Gastrocnemius medialis (tissue), 4 donors: ENCODE measurements at regions of chr9 and their contacts with region 1.

Region 1: GRCh38 chr9:20356403-20357035 is 265.8 kb downstream of the MLLT3 start:
- DNase-seq: peak; percentile 30 to 50
- ATAC-seq: peak; percentile 78 to 81
- H3K4me3 ChIP-seq: peak overlapping the region; percentile 1 to 52 (median 27)
- H3K27ac ChIP-seq: peak overlapping the region; percentile 32 to 60 (median 38)
- H3K4me1 ChIP-seq: peaks cover 27 to 49% of the 10 kb centered on the region in 2 donors
- H3K27me3 ChIP-seq: no peaks in the 10 kb centered on the region
- CTCF ChIP-seq: peak; percentile 17 to 72 (median 40)
- POLR2A ChIP-seq: no peak

Region 2: DNA sequence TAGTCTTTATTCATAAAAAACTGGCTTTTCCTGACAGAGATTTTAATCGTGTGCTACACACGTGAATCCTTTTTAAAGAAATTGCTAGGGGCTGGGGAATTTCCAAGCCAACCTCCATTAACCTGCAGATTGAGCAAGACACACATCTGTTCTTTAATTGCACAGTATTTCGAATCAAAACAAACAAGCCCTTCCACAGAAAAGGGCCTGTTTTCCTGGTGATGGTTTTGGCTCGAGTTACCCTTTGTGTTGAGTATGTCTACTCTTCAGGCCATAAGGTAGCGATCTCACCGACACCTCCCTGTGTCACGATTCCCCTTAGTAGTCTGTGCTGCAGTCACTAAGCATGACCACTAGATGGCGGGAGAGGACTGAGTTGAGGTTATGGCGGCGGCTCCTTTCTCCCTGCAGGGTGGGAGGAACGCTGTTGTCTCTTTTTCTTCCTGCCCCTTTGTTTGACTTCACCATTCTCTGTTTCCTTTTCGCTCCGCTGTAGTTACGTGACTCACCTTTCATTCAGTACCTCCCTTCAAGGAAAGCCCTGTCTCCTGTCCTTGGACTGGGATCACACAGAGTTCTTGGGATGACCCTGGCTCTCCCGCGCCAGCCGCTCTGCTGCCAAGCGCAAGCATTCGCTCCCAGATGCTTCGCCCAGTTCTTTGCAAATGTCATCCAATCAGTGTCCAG is 430.6 kb before region 1 on chr9:
- in situ Hi-C with region 1: loop called in 1 of 4 experiments (anchors 10 kb)
- intact Hi-C with region 1: loop called (anchors 2 kb)
- DNase-seq: peak; percentile 37 to 43
- ATAC-seq: peak; percentile 88 to 96
- H3K4me3 ChIP-seq: peak overlapping the region; percentile 37 to 62 (median 52)
- H3K27ac ChIP-seq: no peak overlapping the region
- H3K4me1 ChIP-seq: peaks cover 0 to 3% of the 10 kb centered on the region in 2 donors
- H3K27me3 ChIP-seq: no peaks in the 10 kb centered on the region
- CTCF ChIP-seq: peak; percentile 86 to 95 (median 90)
- POLR2A ChIP-seq: no peak

Region 3: DNA sequence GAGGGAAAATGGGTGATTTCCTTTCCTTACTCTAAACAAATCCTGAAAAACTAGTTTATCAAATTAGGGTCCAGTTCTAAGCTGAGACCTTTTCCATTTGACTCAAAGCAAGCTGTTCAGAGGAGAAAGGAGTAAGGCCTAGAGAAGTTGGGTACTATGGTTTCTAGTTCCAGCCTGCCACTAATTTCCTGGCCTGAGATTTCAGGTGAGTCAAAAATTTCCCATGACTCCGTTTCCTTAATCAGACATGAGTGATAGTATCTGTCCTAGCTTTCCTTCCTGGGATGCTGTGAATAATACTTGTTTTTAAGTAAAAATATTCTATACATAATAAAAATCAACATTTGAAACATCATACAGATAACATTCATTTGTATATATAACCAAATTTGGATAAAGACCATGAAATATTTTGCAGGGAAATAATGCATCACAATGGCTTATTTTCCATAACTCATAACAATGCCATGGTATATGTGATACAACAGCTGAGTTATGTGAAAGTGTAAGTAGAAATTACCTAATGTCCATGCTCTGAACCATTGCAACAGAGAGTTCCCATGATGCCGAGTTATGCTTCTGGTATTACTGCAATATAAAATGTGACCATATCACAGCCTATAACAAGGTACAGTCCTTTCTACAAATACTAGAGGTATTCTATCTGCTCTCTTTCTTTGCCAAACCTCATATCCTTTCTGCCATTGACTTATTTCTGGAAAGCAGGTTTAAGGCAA is 123.1 kb after region 1 on chr9:
- in situ Hi-C with region 1: no loop called
- intact Hi-C with region 1: loop called (anchors 5 kb)
- DNase-seq: no peak
- ATAC-seq: peak in 1 of 2 donors; percentile 33
- H3K4me3 ChIP-seq: no peak overlapping the region
- H3K27ac ChIP-seq: no peak overlapping the region
- H3K4me1 ChIP-seq: peaks cover 25 to 31% of the 10 kb centered on the region in 2 donors
- H3K27me3 ChIP-seq: no peaks in the 10 kb centered on the region
- CTCF ChIP-seq: no peak
- POLR2A ChIP-seq: no peak

Region 4: GRCh38 chr9:20684035-20684872 is 327.7 kb after region 1 on chr9 and contains the start of gene FOCAD:
- in situ Hi-C with region 1: loop called in 1 of 4 experiments (anchors 25 kb)
- intact Hi-C with region 1: loop called (anchors 2 kb)
- DNase-seq: peak; percentile 92 to 96
- ATAC-seq: peak; percentile 90 to 94
- H3K4me3 ChIP-seq: peak within 1 kb of the TSS; percentile 71 to 82 (median 77)
- H3K27ac ChIP-seq: peak within 1 kb of the TSS; percentile 89 to 98 (median 96)
- H3K4me1 ChIP-seq: peaks cover 16 to 31% of the 10 kb centered on the region in 2 donors
- H3K27me3 ChIP-seq: no peaks in the 10 kb centered on the region
- CTCF ChIP-seq: peak in 1 of 5 experiments; percentile 14
- POLR2A ChIP-seq: peak; percentile 95 to 99
- total RNA-seq, gene FOCAD: 19.5 to 36.0 (median 28.6) TPM

Region 5: GRCh38 chr9:20941174-20941690 is 584.7 kb after region 1 on chr9:
- in situ Hi-C with region 1: loop called (anchors 5 to 25 kb)
- intact Hi-C with region 1: loop called (anchors 1 kb)
- DNase-seq: peak; percentile 14 to 18
- ATAC-seq: peak; percentile 87 to 93
- H3K4me3 ChIP-seq: no peak overlapping the region
- H3K27ac ChIP-seq: no peak overlapping the region
- H3K4me1 ChIP-seq: no peaks in the 10 kb centered on the region
- H3K27me3 ChIP-seq: no peaks in the 10 kb centered on the region
- CTCF ChIP-seq: peak; percentile 62 to 87 (median 72)
- POLR2A ChIP-seq: no peak

Region 6: GRCh38 chr9:21096172-21096900 is 739.8 kb after region 1 on chr9:
- in situ Hi-C with region 1: loop called in 1 of 4 experiments (anchors 25 kb)
- intact Hi-C with region 1: loop called (anchors 10 kb)
- DNase-seq: no peak
- ATAC-seq: peak; percentile 69 to 90
- H3K4me3 ChIP-seq: peak overlapping the region; percentile 30 to 40 (median 36)
- H3K27ac ChIP-seq: peak overlapping the region; percentile 46 to 64 (median 57)
- H3K4me1 ChIP-seq: peaks cover 0 to 15% of the 10 kb centered on the region in 2 donors
- H3K27me3 ChIP-seq: no peaks in the 10 kb centered on the region
- CTCF ChIP-seq: no peak
- POLR2A ChIP-seq: no peak

Region 7: DNA sequence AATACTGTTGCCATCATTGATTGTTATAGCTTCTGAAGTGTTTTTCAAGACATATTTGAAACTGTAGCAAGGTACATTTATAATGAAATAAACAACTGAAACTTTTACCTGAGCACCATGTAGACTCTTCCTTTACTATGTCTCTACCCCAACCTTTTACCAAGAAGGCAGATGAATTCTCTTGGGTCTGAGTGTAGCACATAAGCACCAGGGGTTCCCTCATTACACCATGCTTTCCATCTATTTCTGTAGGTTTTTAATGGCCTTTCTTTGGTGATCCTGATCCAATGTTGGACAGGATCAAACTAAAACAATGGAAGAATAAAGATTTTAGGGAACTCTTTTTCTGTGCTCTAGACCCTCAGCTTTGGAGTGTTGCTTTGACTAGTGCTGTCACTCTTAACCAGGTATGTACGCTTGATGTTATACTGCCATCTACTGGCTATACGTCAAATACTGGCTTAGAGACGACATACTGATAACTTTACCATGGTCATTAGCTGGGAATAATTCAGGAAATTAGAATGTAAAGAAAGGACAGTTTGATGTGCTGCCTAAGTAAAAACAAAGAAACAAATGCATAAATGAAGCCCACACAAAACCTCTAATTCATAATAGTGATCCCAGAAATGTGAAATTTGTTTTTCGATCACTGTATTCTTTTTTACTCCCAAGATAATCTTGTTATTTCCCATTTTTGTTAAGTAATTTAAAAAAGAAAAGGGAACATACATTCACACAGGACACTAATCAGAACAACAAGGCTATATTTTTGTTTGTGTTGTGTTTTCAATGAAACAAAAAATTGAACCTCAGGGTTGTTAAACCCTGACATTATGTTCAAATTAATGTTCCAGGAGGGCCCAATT is 754.4 kb after region 1 on chr9:
- in situ Hi-C with region 1: loop called in 1 of 4 experiments (anchors 25 kb)
- intact Hi-C with region 1: no loop called
- DNase-seq: no peak
- ATAC-seq: peak; percentile 54 to 84
- H3K4me3 ChIP-seq: no peak overlapping the region
- H3K27ac ChIP-seq: no peak overlapping the region
- H3K4me1 ChIP-seq: no peaks in the 10 kb centered on the region
- H3K27me3 ChIP-seq: no peaks in the 10 kb centered on the region
- CTCF ChIP-seq: peak; percentile 37 to 80 (median 70)
- POLR2A ChIP-seq: no peak